Breast epithelium (tissue), 4 donors: ENCODE measurements at regions of chr7 and their contacts with region 1.

Region 1: DNA sequence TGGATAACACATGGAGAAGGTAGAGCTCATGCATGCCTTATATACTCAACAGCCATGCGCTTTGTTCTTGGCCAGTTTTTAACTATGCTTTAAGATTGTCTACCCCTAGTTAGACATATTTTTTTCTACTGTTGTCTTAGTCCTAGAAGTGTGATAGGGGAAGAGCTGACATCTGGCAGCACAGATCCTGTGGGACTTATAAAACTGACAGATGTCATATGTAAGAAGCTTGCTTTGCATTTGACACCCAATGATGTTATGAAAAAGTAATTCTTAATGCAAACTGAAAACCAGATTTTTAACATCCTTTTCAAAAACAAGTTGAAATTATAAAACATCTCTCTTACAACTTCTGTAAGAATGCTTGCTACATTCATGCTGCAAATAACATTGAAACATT is 715.9 kb upstream of the LRRN3 start:
- DNase-seq: no peak
- H3K4me3 ChIP-seq: no peak overlapping the region
- H3K27ac ChIP-seq: no peak overlapping the region
- H3K4me1 ChIP-seq: no peaks in the 10 kb centered on the region
- H3K27me3 ChIP-seq: no peaks in the 10 kb centered on the region
- CTCF ChIP-seq: no peak
- POLR2A ChIP-seq: no peak

Region 2: GRCh38 chr7:108920490-108920889 is 1454.6 kb before region 1 on chr7:
- intact Hi-C with region 1: loop called (anchors 5 kb)
- DNase-seq: no peak
- H3K4me3 ChIP-seq: no peak overlapping the region
- H3K27ac ChIP-seq: no peak overlapping the region
- H3K4me1 ChIP-seq: no peaks in the 10 kb centered on the region
- H3K27me3 ChIP-seq: no peaks in the 10 kb centered on the region
- CTCF ChIP-seq: no peak
- POLR2A ChIP-seq: no peak